Caco-2 (cell line): ENCODE measurements at regions of chr13 and their contacts with region 1.

Region 1: DNA sequence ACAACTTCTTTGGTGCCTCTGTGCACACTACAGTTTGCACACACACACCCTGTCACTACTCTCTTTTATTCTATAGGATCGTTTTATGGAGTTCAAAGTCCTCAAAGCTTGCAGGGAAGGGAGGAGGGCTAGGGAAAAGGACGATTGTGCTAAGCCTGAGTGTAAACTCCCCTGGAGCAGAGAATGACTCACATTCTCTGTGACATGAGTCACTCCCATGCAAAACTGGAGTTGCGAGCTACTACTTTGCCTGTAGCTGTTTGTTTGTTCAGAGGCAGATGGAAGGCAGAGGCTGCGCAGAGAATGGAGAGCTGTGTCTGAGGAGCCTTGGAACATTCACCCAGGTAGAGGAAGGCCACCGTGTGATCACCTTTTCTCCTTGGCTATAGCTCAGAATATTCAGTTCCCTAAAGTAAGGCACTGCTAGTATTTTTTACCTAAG is 80.5 kb upstream of the MBNL2 start:
- DNase-seq: peak; percentile 91 to 95
- H3K4me3 ChIP-seq: peak overlapping the region; percentile 61
- H3K4me3 Mint-ChIP-seq: peak overlapping the region; percentile 83
- H3K27ac Mint-ChIP-seq: peak overlapping the region; percentile 91
- H3K4me1 ChIP-seq: peaks cover 23% of the 10 kb centered on the region
- H3K4me1 Mint-ChIP-seq: peaks cover 37% of the 10 kb centered on the region
- H3K27me3 ChIP-seq: no peaks in the 10 kb centered on the region
- H3K27me3 Mint-ChIP-seq: no peaks in the 10 kb centered on the region
- CTCF ChIP-seq: no peak

Region 2: GRCh38 chr13:97109841-97110492 is 31.6 kb before region 1 on chr13:
- CTCF ChIA-PET with region 1: interaction called, 33 read pairs
- POLR2A ChIA-PET with region 1: no interaction called
- intact Hi-C with region 1: loop called (anchors 1 kb)
- DNase-seq: peak; percentile 88 to 96
- H3K4me3 ChIP-seq: no peak overlapping the region
- H3K4me3 Mint-ChIP-seq: peak overlapping the region; percentile 52
- H3K27ac Mint-ChIP-seq: peak overlapping the region; percentile 36
- H3K4me1 ChIP-seq: peaks cover 30% of the 10 kb centered on the region
- H3K4me1 Mint-ChIP-seq: peaks cover 36% of the 10 kb centered on the region
- H3K27me3 ChIP-seq: no peaks in the 10 kb centered on the region
- H3K27me3 Mint-ChIP-seq: no peaks in the 10 kb centered on the region
- CTCF ChIP-seq: peak; percentile 91 to 93

Region 3: DNA sequence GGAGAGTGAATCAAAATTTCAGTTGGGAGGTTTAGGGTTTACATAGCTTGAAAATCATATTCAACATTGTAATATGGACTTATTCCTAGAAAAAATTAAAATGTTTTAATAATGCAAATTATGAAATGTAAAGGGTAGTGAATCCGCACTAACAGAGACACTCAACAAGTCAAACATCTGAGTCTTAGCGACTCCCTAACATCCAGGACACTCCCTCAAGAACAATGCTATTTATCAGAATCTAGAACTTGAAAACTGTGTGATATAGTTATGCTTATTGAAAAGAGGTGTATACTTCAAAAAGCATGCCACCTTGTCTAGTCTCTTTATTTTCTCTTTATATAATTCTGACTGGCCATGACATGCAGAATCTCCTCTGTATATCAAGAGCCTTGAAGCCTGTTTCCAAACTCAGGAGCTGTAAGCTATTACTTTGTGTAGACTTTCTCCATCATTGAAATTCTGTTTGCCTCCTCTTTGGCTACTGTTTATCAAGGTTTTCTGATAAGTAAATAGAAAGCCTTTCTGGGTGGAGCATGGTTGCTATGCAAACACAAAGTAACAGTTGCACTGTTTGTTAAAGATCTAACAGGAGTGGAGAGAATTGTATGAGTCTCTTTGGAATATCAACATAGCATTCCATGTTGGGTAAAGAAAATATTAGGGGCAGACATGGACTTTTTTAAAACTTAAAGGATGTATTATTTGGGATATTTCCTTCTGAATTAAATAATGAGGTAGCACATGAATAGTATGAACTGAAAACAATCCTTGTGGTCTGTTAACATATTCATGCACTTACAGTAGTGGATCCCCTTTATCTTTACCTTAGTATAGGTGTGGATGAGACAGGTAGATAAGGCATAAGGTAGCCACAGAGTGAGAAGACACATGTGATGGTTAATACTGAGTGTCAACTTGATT is 24.2 kb after region 1 on chr13:
- CTCF ChIA-PET with region 1: no interaction called
- POLR2A ChIA-PET with region 1: no interaction called
- intact Hi-C with region 1: loop called (anchors 1 kb)
- DNase-seq: peak in 1 of 2 experiments; percentile 55
- H3K4me3 ChIP-seq: no peak overlapping the region
- H3K4me3 Mint-ChIP-seq: no peak overlapping the region
- H3K27ac Mint-ChIP-seq: peak overlapping the region; percentile 72
- H3K4me1 ChIP-seq: peaks cover 11% of the 10 kb centered on the region
- H3K4me1 Mint-ChIP-seq: peaks cover 23% of the 10 kb centered on the region
- H3K27me3 ChIP-seq: no peaks in the 10 kb centered on the region
- H3K27me3 Mint-ChIP-seq: no peaks in the 10 kb centered on the region
- CTCF ChIP-seq: no peak

Region 4: GRCh38 chr13:97185321-97185720 is 43.7 kb after region 1 on chr13:
- CTCF ChIA-PET with region 1: no interaction called
- POLR2A ChIA-PET with region 1: no interaction called
- intact Hi-C with region 1: no loop called
- DNase-seq: no peak
- H3K4me3 ChIP-seq: no peak overlapping the region
- H3K4me3 Mint-ChIP-seq: no peak overlapping the region
- H3K27ac Mint-ChIP-seq: peak overlapping the region; percentile 26
- H3K4me1 ChIP-seq: peaks cover 12% of the 10 kb centered on the region
- H3K4me1 Mint-ChIP-seq: peaks cover 21% of the 10 kb centered on the region
- H3K27me3 ChIP-seq: no peaks in the 10 kb centered on the region
- H3K27me3 Mint-ChIP-seq: no peaks in the 10 kb centered on the region
- CTCF ChIP-seq: no peak

Region 5: GRCh38 chr13:97212601-97213040 is 71.0 kb after region 1 on chr13:
- CTCF ChIA-PET with region 1: interaction called, 4 read pairs
- POLR2A ChIA-PET with region 1: no interaction called
- intact Hi-C with region 1: loop called (anchors 1 kb)
- DNase-seq: peak in 1 of 2 experiments; percentile 65
- H3K4me3 ChIP-seq: no peak overlapping the region
- H3K4me3 Mint-ChIP-seq: no peak overlapping the region
- H3K27ac Mint-ChIP-seq: no peak overlapping the region
- H3K4me1 ChIP-seq: peaks cover 24% of the 10 kb centered on the region
- H3K4me1 Mint-ChIP-seq: peaks cover 22% of the 10 kb centered on the region
- H3K27me3 ChIP-seq: no peaks in the 10 kb centered on the region
- H3K27me3 Mint-ChIP-seq: no peaks in the 10 kb centered on the region
- CTCF ChIP-seq: peak; percentile 59 to 69

Region 6: DNA sequence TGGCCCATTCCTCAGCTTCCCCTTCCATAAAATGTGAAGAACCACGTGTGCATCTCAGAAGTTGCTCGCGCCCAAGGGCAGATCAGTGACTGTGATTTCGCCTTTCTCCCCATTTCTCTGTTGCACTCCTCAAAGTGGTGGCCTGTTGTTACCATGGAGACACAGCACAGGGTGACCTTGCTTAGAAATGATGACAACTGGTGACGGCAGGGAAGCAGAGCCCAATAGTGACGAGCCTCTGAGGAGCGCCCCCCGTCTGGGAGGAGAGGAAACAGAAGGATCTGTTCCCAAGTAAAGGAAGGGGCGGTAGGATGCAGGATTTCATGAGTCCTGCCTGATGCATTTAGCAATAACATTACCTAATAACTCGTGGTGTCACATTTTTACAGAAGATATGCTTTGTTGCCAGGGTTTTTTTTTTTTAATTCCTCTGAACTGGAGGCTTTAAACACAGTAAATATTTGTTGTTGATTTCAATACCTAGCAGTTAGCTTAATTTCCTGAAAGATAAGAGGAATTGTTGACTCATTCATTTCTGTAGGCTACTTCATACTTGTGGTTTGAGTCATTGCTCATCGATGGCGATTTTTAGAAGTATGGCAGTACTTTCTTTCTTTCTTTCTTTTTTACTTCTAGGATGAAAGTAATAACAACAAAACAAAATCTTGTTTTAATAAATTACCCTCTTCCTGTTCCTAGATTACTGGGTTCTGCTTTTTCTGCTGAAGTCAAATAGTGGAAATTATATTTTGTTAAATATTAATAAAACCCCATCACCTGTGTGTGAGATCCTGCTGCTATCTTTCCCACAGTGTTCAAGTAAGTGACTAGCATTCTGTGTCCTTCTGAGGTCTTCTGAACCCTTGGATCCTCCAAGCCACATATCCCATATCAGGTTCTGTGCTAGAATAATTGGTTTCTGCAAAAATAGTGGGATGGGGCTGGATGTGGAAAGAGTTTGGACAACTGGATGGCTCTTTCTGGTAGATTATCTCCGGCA is 116.5 kb after region 1 on chr13:
- CTCF ChIA-PET with region 1: no interaction called
- POLR2A ChIA-PET with region 1: no interaction called
- intact Hi-C with region 1: loop called (anchors 5 kb)
- DNase-seq: peak; percentile 86 to 88
- H3K4me3 ChIP-seq: no peak overlapping the region
- H3K4me3 Mint-ChIP-seq: peak overlapping the region; percentile 62
- H3K27ac Mint-ChIP-seq: peak overlapping the region; percentile 98
- H3K4me1 ChIP-seq: peaks cover 76% of the 10 kb centered on the region
- H3K4me1 Mint-ChIP-seq: peaks cover 70% of the 10 kb centered on the region
- H3K27me3 ChIP-seq: no peaks in the 10 kb centered on the region
- H3K27me3 Mint-ChIP-seq: no peaks in the 10 kb centered on the region
- CTCF ChIP-seq: peak in 1 of 2 experiments; percentile 12